CD8-positive, alpha-beta T cell (primary cell): ENCODE measurements at regions of chr2 and their contacts with region 1.

Region 1: DNA sequence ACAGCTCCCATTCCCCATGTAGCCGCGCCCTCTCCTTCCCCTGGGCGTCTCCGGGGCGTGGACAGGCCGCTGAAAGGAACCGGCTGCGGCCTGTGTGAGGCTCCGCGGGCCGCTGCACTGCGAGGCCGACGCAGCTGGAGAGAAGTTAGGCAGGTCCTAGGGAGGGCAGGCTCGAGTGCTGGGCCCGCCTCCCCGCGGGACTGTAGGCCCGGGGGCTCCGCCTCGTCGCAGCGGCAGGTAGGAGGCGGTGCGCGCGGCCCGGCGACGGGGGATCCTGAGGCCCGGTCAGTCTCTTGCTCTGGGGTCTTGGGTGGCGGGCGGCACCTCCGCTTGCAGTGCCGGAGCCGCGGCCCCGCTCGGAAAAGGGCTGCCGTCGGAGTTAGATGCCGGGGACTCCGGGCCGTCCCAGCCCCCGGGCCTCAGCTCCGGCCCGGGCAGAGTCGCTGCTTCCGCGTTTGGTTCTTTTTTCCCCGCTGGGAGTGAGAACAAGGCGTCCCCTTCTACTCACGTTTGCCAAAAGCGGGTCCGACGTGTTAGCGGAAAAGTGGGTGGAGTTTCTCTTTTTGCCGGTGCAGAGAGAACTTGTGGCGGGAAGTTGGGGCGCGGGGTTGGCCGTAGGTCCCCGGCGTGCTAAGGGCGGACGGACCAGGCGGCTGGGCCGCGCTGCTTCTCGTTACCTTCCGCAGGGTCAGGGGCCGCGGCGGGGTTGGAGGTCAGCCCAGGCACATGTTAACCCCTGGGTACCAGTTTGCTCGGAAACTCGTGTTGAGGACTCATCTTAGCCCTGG is at the start of gene VRK2:
- DNase-seq: peak; percentile 66 to 92 (median 82)
- ATAC-seq: peak; percentile 90
- H3K4me3 ChIP-seq: peak within 1 kb of the TSS; percentile 73 to 86
- H3K4me3 Mint-ChIP-seq: peak within 1 kb of the TSS; percentile 90
- H3K27ac ChIP-seq: peak within 1 kb of the TSS; percentile 82 to 91
- H3K27ac Mint-ChIP-seq: peak within 1 kb of the TSS; percentile 96
- H3K4me1 ChIP-seq: peaks cover 18% of the 10 kb centered on the region
- H3K4me1 Mint-ChIP-seq: peaks cover 52% of the 10 kb centered on the region
- H3K27me3 ChIP-seq: no peaks in the 10 kb centered on the region
- H3K27me3 Mint-ChIP-seq: no peaks in the 10 kb centered on the region
- CTCF ChIP-seq: no peak
- total RNA-seq, gene VRK2: 11.0 to 11.1 TPM

Region 2: DNA sequence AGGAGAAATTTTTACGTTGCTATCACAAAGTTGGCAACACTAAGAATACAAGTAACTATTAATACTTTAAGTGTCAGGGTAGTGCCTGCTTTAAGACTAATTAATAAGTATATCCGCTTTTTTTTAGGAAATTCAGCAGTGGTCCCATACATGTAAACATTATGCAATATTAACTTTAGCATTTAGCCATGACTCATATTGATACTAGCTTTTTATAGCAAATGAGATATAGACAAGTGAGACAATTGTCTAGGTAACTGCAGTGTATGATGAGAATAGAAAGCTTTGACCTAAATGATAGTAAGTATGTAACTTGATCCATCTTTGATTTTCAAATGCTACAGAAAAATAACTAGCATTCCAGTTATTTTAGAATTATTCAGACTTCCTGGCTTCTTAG is 27.6 kb before region 1 on chr2:
- CTCF ChIA-PET with region 1: no interaction called
- POLR2A ChIA-PET with region 1: interaction called, 4 read pairs
- intact Hi-C with region 1: loop called in 1 of 2 experiments (anchors 1 kb)
- DNase-seq: no peak
- ATAC-seq: no peak
- H3K4me3 ChIP-seq: no peak overlapping the region
- H3K4me3 Mint-ChIP-seq: no peak overlapping the region
- H3K27ac ChIP-seq: no peak overlapping the region
- H3K27ac Mint-ChIP-seq: no peak overlapping the region
- H3K4me1 ChIP-seq: no peaks in the 10 kb centered on the region
- H3K4me1 Mint-ChIP-seq: peaks cover 9% of the 10 kb centered on the region
- H3K27me3 ChIP-seq: no peaks in the 10 kb centered on the region
- H3K27me3 Mint-ChIP-seq: no peaks in the 10 kb centered on the region
- CTCF ChIP-seq: no peak

Region 3: DNA sequence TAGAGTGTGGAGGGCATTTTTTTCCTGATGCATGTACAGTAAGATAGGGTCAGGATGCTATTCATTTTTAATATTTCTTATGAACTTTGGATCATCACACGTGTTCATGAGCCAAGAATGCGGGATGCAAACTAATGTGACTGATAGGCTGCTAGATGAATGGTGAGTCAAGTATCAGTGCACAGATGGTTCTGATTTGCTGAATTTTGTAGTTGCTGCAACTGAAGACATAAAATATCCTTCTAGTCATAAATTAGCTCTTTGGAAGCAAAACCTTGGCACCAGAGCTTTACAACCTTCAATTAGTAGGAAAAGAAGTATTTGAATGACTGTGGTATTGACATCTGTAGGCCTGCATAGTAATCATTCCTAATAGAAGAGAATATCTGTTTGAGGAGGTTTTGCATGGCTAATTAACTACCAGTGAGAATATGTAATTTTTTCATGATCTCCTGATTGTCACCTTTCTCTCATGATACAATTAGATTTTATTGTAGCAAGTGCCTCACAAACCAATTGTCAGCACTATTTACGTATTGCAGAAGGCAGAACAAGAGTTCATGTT is 93.8 kb after region 1 on chr2:
- CTCF ChIA-PET with region 1: no interaction called
- POLR2A ChIA-PET with region 1: no interaction called
- intact Hi-C with region 1: loop called in 1 of 2 experiments (anchors 5 kb)
- DNase-seq: no peak
- ATAC-seq: no peak
- H3K4me3 ChIP-seq: no peak overlapping the region
- H3K4me3 Mint-ChIP-seq: no peak overlapping the region
- H3K27ac ChIP-seq: no peak overlapping the region
- H3K27ac Mint-ChIP-seq: no peak overlapping the region
- H3K4me1 ChIP-seq: no peaks in the 10 kb centered on the region
- H3K4me1 Mint-ChIP-seq: no peaks in the 10 kb centered on the region
- H3K27me3 ChIP-seq: no peaks in the 10 kb centered on the region
- H3K27me3 Mint-ChIP-seq: no peaks in the 10 kb centered on the region
- CTCF ChIP-seq: no peak

Region 4: DNA sequence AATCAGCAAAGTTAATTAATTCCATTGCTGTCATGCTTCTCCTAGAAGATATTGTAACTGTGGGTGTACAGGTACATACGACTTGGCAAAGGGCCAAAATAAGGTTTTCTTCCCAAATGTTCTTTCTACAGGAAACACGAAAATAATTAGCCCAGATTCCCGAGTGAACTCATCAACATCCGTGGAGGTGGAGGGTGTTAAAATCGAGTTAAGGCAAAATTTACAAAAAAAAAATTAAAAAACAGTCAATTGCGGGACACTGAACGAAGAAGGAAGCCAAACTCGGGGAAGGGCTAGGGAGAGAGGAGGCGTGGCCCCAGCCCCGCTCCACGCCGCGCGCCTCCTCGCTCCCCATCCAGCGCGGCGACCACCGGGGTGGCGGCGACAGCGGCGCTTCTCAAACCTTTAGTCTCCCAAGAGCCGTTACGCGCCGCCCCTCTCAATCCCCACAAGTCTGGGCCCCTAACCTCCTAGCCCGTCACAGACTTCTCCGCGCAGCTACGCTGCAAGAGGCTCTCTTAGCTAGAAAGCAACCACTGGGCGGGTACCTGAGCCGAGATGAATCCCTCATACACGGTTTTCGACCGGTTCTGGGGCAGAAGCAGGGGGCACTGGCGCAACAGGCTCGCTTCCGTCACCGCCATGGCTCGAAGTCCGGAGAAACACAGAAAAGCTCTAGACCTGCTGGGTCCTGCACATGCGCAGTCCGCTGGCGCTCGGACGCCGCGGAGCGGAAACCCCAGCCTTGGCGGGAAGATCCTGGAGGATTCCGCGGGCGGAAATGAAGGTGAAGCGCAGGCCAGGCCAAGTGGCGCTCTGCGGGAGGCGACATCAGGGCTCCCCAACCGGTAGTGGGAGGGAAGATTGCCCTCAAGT is 194.1 kb after region 1 on chr2 and contains the start of gene FANCL:
- CTCF ChIA-PET with region 1: interaction called, 3 read pairs
- POLR2A ChIA-PET with region 1: no interaction called
- intact Hi-C with region 1: loop called in 1 of 2 experiments (anchors 2 kb)
- DNase-seq: peak; percentile 12 to 78 (median 53)
- ATAC-seq: peak; percentile 77
- H3K4me3 ChIP-seq: peak within 1 kb of the TSS; percentile 85 to 90
- H3K4me3 Mint-ChIP-seq: peak within 1 kb of the TSS; percentile 94
- H3K27ac ChIP-seq: peak within 1 kb of the TSS; percentile 27 to 58
- H3K27ac Mint-ChIP-seq: peak within 1 kb of the TSS; percentile 62
- H3K4me1 ChIP-seq: peaks cover 6% of the 10 kb centered on the region
- H3K4me1 Mint-ChIP-seq: peaks cover 42% of the 10 kb centered on the region
- H3K27me3 ChIP-seq: no peaks in the 10 kb centered on the region
- H3K27me3 Mint-ChIP-seq: peaks cover 6% of the 10 kb centered on the region
- CTCF ChIP-seq: no peak
- total RNA-seq, gene FANCL: 4.3 to 6.7 TPM

Region 5: GRCh38 chr2:58851598-58851997 is 804.8 kb after region 1 on chr2:
- CTCF ChIA-PET with region 1: no interaction called
- POLR2A ChIA-PET with region 1: no interaction called
- intact Hi-C with region 1: no loop called
- DNase-seq: no peak
- ATAC-seq: no peak
- H3K4me3 ChIP-seq: no peak overlapping the region
- H3K4me3 Mint-ChIP-seq: no peak overlapping the region
- H3K27ac ChIP-seq: no peak overlapping the region
- H3K27ac Mint-ChIP-seq: no peak overlapping the region
- H3K4me1 ChIP-seq: no peaks in the 10 kb centered on the region
- H3K4me1 Mint-ChIP-seq: no peaks in the 10 kb centered on the region
- H3K27me3 ChIP-seq: no peaks in the 10 kb centered on the region
- H3K27me3 Mint-ChIP-seq: no peaks in the 10 kb centered on the region
- CTCF ChIP-seq: no peak

Region 6: DNA sequence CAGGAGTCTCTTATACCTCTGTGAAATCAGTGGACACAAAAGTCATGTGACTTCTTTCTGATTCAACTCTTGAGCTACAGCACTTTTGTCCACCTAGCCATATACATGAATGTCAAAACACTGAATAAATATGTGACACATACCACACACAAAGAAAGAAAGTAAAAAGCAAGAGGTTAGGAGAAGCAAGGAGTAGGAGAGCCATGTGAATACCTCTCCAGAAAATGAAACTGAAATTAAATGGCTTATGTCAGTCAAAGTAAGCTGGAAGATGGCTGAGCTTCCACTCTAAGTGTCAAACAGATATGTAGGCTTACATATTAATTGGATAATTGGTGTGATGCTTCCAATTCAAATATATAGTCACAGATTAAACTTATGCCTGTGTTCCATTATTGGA is 1456.2 kb after region 1 on chr2:
- CTCF ChIA-PET with region 1: no interaction called
- POLR2A ChIA-PET with region 1: no interaction called
- intact Hi-C with region 1: no loop called
- DNase-seq: no peak
- ATAC-seq: no peak
- H3K4me3 ChIP-seq: no peak overlapping the region
- H3K4me3 Mint-ChIP-seq: no peak overlapping the region
- H3K27ac ChIP-seq: no peak overlapping the region
- H3K27ac Mint-ChIP-seq: no peak overlapping the region
- H3K4me1 ChIP-seq: no peaks in the 10 kb centered on the region
- H3K4me1 Mint-ChIP-seq: no peaks in the 10 kb centered on the region
- H3K27me3 ChIP-seq: no peaks in the 10 kb centered on the region
- H3K27me3 Mint-ChIP-seq: no peaks in the 10 kb centered on the region
- CTCF ChIP-seq: no peak